ENCODE measurements at regions of chr21 and their contacts with region 1.

Region 1: DNA sequence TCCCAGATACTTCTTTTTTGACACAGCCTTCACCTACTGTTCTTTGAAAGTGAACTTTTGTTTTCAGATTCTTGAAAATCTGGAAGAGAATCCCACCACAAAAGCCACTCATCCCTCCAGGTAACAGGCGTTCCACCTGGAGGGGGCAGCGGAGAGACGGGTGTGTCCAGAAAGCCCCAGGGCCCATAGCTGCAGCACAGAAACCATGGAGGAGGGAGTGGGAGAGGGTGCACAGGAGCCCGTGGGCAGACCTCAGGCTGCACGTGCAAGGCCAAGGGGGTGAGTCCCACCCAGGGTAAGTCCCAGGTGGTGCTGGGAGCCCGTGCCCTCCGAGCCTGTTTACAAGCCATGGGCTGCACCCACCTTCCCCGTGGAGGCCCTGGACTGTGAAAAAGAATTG is 86.5 kb downstream of the PSMG1 start:
- DNase-seq: peak; percentile 5
- H3K4me3 ChIP-seq: no peak overlapping the region
- H3K27ac ChIP-seq: no peak overlapping the region
- H3K4me1 ChIP-seq: no peaks in the 10 kb centered on the region
- CTCF ChIP-seq: peak; percentile 50

Region 2: GRCh38 chr21:39033878-39034602 is 62.7 kb before region 1 on chr21:
- CTCF ChIA-PET with region 1: no interaction called
- POLR2A ChIA-PET with region 1: no interaction called
- intact Hi-C with region 1: no loop called
- DNase-seq: no peak
- H3K4me3 ChIP-seq: no peak overlapping the region
- H3K27ac ChIP-seq: no peak overlapping the region
- H3K4me1 ChIP-seq: no peaks in the 10 kb centered on the region
- CTCF ChIP-seq: no peak

Region 3: DNA sequence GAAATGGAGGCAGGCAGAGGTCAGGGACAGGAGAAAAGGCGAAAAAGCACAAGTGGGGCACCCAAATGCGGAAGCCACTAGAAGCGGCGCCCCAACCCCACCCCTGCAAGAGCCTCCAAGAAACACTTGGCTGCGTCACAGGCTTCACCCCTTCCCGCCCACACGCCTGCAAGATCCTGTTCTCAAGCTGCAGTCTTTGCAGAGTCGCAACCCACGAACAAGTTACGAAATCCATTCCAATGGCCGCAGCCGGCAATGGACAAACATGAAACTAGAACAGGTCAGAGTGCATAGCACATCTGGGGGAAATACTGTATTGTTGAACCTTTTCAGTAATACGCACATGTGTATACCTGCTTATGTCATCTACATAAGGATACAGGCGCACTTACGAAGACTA is 17.1 kb before region 1 on chr21:
- CTCF ChIA-PET with region 1: no interaction called
- POLR2A ChIA-PET with region 1: interaction called, 10 read pairs
- intact Hi-C with region 1: no loop called
- DNase-seq: no peak
- H3K4me3 ChIP-seq: no peak overlapping the region
- H3K27ac ChIP-seq: no peak overlapping the region
- H3K4me1 ChIP-seq: peaks cover 4% of the 10 kb centered on the region
- CTCF ChIP-seq: no peak

Region 4: GRCh38 chr21:39818557-39819325 is 722.0 kb after region 1 on chr21:
- CTCF ChIA-PET with region 1: no interaction called
- POLR2A ChIA-PET with region 1: no interaction called
- intact Hi-C with region 1: no loop called
- DNase-seq: peak; percentile 10
- H3K4me3 ChIP-seq: no peak overlapping the region
- H3K27ac ChIP-seq: no peak overlapping the region
- H3K4me1 ChIP-seq: no peaks in the 10 kb centered on the region
- CTCF ChIP-seq: no peak